ENCODE measurements at regions of chr16 and their contacts with region 1.

Region 1: DNA sequence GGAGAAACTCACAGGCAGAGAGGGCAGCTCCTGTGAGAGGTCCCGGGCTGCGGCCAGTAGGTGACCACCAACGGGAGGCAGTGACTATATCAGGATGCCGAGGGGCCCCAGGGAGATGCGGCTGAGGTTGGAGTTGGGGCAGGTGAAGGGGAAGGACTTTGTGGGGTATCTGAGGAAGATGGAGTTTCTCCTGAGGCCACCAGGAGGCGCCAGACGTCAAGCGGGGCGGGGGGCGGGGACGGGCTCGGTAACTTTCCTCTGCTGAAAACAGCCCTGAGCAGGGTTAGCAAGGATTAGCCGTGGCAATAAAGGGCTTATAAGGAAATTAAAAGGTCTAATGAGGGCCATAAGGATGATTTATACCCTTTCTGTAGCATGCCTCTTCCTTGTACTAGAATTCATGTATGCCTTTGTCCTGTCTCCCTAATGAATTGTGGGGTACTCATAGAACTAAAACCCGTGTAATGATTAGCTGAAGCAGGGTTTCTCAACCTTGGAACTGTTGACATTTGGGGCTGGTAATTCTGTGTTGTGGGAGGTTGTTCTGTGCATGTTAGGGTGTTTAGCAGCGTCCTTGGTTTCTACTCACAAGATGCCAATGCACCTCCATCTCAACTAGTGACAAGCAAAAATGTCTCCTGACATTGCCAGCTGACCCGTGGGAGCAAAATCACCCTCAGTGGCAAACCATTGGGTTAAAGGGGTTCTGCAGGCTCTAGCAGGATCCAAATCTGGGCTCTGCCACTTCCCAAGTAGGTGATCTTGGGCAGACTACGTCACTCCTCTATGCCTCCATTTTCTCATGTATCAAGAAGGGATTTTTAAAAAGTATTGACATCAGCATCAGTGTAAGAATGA is 74.8 kb upstream of the GRIN2A start:
- DNase-seq: peak; percentile 86
- H3K4me3 ChIP-seq: peak overlapping the region in 1 of 2 experiments; percentile 19; a peak in 1 of 4 replicates
- H3K27ac ChIP-seq: no peak overlapping the region
- H3K4me1 ChIP-seq: no peaks in the 10 kb centered on the region; a peak in 1 of 4 replicates
- H3K27me3 ChIP-seq: no peaks in the 10 kb centered on the region
- CTCF ChIP-seq: peak; percentile 48
- EP300 ChIP-seq: no peak
- RAD21 ChIP-seq: peak; percentile 65

Region 2: GRCh38 chr16:10088380-10088793 is 168.6 kb before region 1 on chr16:
- CTCF ChIA-PET with region 1: no interaction called
- POLR2A ChIA-PET with region 1: no interaction called
- DNase-seq: peak; percentile 55
- H3K4me3 ChIP-seq: no peak overlapping the region
- H3K27ac ChIP-seq: peak overlapping the region in 1 of 2 experiments; percentile 86; a peak in 2 of 4 replicates
- H3K4me1 ChIP-seq: peaks cover 0 to 15% of the 10 kb centered on the region in 2 experiments; a peak in 2 of 4 replicates
- H3K27me3 ChIP-seq: no peaks in the 10 kb centered on the region
- CTCF ChIP-seq: no peak
- EP300 ChIP-seq: peak in 1 of 2 experiments; percentile 61; a peak in 1 of 4 replicates
- RAD21 ChIP-seq: peak; percentile 1; the same call in 1 of the 2 replicates

Region 3: DNA sequence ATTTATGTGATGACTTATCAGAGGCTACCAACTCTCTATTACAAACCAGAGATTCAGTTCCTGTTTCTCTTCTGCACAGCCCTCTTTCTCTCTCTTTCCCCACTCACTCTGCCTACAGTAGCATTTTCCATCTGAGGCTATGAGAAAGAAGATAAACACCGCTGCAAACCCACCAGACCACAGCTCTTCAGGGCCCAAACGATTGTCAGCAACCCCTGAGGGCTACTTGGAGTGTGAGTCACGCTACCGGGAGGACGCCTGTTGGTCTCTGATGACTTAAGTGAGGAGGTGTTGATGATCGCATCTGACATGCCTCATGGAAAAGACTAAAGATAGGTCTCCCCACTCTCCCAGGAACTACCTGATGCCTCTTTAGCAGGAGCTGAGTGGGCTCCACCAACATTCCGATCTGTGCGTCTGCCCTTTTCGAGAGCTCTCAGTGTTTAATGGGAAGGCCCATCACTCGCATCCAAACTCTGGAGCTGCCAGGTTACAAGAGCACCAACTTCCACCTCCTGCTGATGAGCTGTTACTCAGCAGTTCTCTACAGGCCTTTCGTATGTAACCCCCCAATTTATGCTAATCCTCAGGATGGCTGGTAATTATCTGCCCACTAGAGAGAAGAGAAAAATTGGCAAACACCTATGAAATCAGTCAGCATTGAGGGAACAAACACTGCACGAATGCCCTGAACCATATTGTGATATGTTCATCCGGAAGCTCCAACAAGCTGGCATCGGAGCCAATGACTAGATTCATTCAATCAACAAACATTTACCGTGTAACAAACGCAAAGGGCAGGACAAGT is 84.0 kb before region 1 on chr16:
- CTCF ChIA-PET with region 1: no interaction called
- POLR2A ChIA-PET with region 1: no interaction called
- DNase-seq: no peak
- H3K4me3 ChIP-seq: no peak overlapping the region
- H3K27ac ChIP-seq: no peak overlapping the region
- H3K4me1 ChIP-seq: no peaks in the 10 kb centered on the region
- H3K27me3 ChIP-seq: no peaks in the 10 kb centered on the region
- CTCF ChIP-seq: no peak
- EP300 ChIP-seq: no peak
- RAD21 ChIP-seq: no peak

Region 4: DNA sequence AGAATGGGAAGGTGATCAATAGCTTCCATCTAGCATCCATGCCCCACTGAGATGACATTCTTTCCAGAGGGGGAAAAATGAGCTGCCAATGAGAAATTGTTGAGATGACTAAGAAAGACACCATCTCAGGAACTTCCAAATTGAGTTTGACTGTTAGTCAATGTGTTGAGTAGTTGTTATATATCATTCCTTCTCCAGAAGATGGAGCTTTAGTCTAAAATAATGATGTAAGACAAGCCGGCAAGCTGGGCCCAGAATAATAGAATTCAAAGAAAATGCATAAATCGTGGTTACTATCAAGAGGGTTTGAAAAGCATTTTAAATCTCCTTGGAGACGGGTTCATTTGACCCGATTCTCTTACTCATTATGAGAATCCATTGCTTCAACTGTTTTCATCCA is 57.8 kb after region 1 on chr16:
- CTCF ChIA-PET with region 1: interaction called, 11 read pairs
- POLR2A ChIA-PET with region 1: no interaction called
- DNase-seq: peak; percentile 8
- H3K4me3 ChIP-seq: no peak overlapping the region
- H3K27ac ChIP-seq: no peak overlapping the region
- H3K4me1 ChIP-seq: no peaks in the 10 kb centered on the region
- H3K27me3 ChIP-seq: no peaks in the 10 kb centered on the region
- CTCF ChIP-seq: no peak
- EP300 ChIP-seq: no peak
- RAD21 ChIP-seq: peak; percentile 52

Region 5: DNA sequence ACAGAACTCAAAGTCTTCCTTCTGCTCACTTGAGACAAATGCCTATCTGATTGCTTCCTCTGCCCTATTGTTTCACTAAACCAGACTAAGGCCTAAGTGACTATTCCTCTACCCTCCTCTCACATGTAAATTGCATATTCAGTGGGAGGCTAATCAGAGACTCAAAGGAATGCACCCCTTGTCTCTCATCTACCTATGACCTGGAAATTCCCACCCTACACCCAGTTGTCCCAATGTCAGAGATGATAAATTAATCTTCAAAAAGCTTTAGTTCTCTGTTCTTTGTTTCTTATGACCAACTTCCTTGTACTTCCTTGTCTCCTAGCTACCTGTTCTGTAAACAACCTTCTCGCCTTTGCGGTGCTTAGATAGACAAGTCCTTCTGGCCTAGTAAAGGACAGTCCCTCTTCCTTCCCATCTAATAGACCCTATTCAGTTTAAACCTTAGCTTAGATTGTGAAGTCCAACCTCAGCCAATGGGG is 247.4 kb after region 1 on chr16:
- CTCF ChIA-PET with region 1: interaction called, 49 read pairs
- POLR2A ChIA-PET with region 1: no interaction called
- DNase-seq: no peak
- H3K4me3 ChIP-seq: no peak overlapping the region
- H3K27ac ChIP-seq: no peak overlapping the region
- H3K4me1 ChIP-seq: no peaks in the 10 kb centered on the region
- H3K27me3 ChIP-seq: no peaks in the 10 kb centered on the region
- CTCF ChIP-seq: no peak
- EP300 ChIP-seq: no peak
- RAD21 ChIP-seq: no peak